Ovary (tissue), 10 donors: ENCODE measurements at regions of chr19 and their contacts with region 1.

Region 1: DNA sequence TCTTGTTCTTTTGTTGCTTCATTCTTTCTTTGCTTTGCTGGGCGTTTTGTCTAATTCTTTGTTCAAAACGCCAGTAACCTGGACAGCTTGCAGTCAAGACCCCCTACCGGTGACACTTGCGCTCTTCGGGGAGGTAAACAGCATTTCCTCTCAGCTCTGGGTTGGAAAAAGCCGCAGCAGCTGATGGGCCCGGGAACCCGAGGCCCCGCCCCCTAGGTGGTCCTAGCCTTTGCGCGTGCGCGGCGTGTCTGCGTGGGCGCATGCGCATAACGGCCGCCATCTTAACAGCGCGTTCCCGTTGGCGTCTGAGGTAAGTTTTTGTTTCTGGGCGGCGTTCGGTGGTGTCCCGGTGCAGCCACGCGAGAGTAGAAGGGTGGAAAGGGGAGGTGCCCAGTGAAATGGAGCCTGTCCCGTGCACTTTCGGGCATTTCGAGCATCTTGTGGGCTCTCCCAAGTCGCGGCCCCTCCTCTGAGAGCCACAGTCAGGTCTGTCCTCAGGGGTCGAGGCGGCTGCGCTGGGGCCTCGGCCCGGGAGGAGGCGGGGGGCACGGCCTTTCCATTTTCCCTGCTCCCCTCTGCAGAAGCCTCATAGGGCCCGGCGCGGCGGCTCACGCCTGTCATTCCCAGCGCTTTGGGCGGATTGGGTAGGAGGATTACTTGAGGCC is at the start of gene ZNF559:
- DNase-seq: peak; percentile 93 to 98 (median 95)
- H3K4me3 ChIP-seq: peak within 1 kb of the TSS; percentile 91
- H3K27ac ChIP-seq: peak within 1 kb of the TSS; percentile 61 to 77
- H3K4me1 ChIP-seq: no peaks in the 10 kb centered on the region
- H3K27me3 ChIP-seq: no peaks in the 10 kb centered on the region
- CTCF ChIP-seq: peak in 1 of 3 donors; percentile 45
- EP300 ChIP-seq: no peak
- POLR2A ChIP-seq: no peak
- total RNA-seq, gene ZNF559: 22.7 to 45.3 (median 28.1) TPM

Region 2: DNA sequence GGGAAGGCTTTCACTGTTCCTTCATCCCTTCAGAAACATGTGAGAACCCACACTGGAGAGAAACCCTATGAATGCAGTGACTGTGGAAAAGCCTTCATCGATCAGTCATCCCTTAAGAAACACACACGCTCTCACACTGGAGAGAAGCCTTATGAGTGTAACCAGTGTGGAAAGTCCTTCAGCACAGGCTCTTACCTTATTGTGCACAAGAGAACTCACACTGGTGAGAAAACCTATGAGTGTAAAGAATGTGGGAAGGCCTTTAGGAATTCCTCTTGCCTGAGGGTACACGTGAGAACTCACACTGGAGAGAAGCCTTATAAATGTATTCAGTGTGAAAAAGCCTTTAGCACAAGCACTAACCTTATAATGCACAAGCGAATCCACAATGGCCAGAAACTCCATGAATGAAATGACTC is 57.3 kb after region 1 on chr19:
- intact Hi-C with region 1: no loop called
- DNase-seq: no peak
- H3K4me3 ChIP-seq: no peak overlapping the region
- H3K27ac ChIP-seq: no peak overlapping the region
- H3K4me1 ChIP-seq: no peaks in the 10 kb centered on the region
- H3K27me3 ChIP-seq: no peaks in the 10 kb centered on the region
- CTCF ChIP-seq: no peak
- EP300 ChIP-seq: no peak
- POLR2A ChIP-seq: no peak

Region 3: GRCh38 chr19:9456018-9456689 is 132.1 kb after region 1 on chr19:
- intact Hi-C with region 1: no loop called
- DNase-seq: no peak
- H3K4me3 ChIP-seq: no peak overlapping the region
- H3K27ac ChIP-seq: no peak overlapping the region
- H3K4me1 ChIP-seq: no peaks in the 10 kb centered on the region
- H3K27me3 ChIP-seq: no peaks in the 10 kb centered on the region
- CTCF ChIP-seq: no peak
- EP300 ChIP-seq: no peak
- POLR2A ChIP-seq: no peak

Region 4: GRCh38 chr19:9785367-9786331 is 461.6 kb after region 1 on chr19:
- intact Hi-C with region 1: loop called in 2 of 4 experiments (anchors 5 to 10 kb)
- DNase-seq: peak; percentile 97 to 99 (median 99)
- H3K4me3 ChIP-seq: peak overlapping the region; percentile 81
- H3K27ac ChIP-seq: peak overlapping the region; percentile 77 to 98
- H3K4me1 ChIP-seq: peaks cover 7% of the 10 kb centered on the region
- H3K27me3 ChIP-seq: no peaks in the 10 kb centered on the region
- CTCF ChIP-seq: no peak
- EP300 ChIP-seq: no peak
- POLR2A ChIP-seq: peak; percentile 95

Region 5: DNA sequence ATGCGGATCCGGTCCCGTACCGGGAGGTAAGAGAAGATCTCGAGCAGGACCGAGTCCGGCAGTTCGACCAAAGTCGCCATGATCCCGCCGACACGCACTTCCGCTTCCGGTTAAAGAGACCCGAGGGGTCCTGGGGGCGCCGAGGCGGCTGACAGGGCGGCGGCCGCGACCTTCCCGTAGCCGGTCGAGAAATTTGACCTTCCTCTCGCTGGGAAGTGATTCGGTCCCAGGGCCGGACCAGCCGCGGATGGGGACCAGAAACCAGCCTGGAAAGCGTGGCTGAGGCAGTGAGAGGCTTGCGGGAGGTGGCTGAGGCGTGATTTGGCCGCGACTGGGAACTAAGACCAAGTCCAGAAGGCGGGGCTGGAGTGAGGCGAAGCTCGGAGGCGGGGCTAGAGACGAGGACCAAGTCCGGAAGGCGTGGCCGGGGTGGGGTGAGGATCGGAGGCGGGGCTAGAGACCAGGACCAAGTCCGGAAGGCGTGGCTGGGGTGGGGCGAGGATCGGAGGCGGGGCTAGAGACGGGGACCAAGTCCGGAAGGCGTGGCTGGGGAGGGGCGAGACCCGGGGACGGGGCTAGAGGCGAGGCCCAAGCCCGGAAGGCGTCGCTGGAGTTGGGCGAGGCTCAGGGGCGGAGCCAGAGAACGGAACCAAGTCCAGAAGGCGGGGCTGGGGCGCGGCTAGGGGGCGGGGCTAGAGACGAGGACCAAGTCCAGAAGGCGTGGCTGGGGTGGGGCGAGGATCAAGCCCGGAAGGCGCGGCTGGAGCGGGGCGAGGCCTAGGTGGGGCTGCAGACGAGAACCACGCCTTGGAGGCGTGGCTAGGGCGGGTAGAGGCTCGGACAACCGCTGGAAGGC is 494.9 kb after region 1 on chr19 and contains the start of gene FBXL12:
- intact Hi-C with region 1: loop called in 1 of 4 experiments (anchors 10 kb)
- DNase-seq: peak; percentile 100
- H3K4me3 ChIP-seq: peak within 1 kb of the TSS; percentile 95
- H3K27ac ChIP-seq: peak within 1 kb of the TSS; percentile 84 to 94
- H3K4me1 ChIP-seq: peaks cover 1% of the 10 kb centered on the region
- H3K27me3 ChIP-seq: no peaks in the 10 kb centered on the region
- CTCF ChIP-seq: no peak
- EP300 ChIP-seq: no peak
- POLR2A ChIP-seq: peak; percentile 90
- total RNA-seq, gene FBXL12: 22.3 to 34.4 (median 27.7) TPM